ENCODE measurements at regions of chr7 and their contacts with region 1.

Region 1: DNA sequence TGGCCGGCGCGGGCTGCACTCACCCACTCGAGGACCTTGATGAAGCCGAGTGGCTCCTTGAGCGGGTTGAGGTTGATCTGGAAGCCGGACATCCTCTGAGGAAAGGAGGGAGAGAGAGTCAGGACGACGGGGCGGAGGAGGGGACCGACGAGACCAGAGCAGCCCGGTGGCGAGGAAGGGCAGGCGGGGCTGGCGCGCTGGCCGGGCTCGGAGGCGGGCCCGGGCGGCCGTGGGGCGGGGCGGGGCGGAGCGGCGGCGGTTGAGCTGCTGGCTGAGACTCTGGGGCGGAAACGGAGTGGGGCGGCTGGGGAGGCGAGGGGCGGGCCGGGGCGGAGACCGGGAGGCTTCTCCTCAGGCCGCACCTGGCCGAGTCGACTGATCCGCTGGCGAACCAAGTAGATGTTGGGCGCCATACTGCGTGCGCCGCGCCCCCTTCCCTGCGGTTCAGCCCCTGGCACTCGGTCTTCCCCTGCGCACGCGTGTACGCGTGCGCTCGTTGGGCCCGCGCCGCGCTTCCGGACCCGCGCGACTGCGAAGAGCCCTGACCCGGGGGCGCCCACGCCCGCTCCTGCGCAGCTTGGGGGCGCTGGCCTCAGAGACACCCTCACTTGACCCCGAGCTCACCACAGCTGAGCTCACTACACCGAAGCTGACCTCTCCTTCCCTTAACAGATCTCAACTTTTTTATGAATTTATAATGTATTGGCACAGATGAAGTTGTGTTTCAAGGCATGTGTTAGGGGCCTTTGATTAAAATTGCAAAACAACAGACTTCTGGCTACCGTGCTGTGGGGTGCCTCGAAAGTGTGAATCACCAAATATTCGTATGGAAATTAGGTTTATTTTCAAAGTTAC is at the start of gene SYPL1:
- DNase-seq: peak; percentile 86 to 97 (median 95)
- ATAC-seq: peak; percentile 88
- H3K4me3 ChIP-seq: peak within 1 kb of the TSS; percentile 64 to 69
- H3K4me3 Mint-ChIP-seq: peak within 1 kb of the TSS; percentile 89
- H3K27ac ChIP-seq: peak within 1 kb of the TSS; percentile 84 to 85
- H3K27ac Mint-ChIP-seq: peak within 1 kb of the TSS; percentile 96
- H3K4me1 ChIP-seq: peaks cover 71% of the 10 kb centered on the region
- H3K4me1 Mint-ChIP-seq: peaks cover 72% of the 10 kb centered on the region
- H3K27me3 ChIP-seq: no peaks in the 10 kb centered on the region
- H3K27me3 Mint-ChIP-seq: no peaks in the 10 kb centered on the region
- CTCF ChIP-seq: no peak
- total RNA-seq, gene SYPL1: 50.0 to 51.2 TPM

Region 2: GRCh38 chr7:104943502-104944343 is 1168.6 kb before region 1 on chr7:
- CTCF ChIA-PET with region 1: no interaction called
- POLR2A ChIA-PET with region 1: no interaction called
- intact Hi-C with region 1: loop called in 1 of 2 experiments (anchors 5 kb)
- DNase-seq: peak; percentile 40 to 86 (median 69)
- ATAC-seq: peak; percentile 24
- H3K4me3 ChIP-seq: peak overlapping the region; percentile 10 to 18
- H3K4me3 Mint-ChIP-seq: peak overlapping the region; percentile 83
- H3K27ac ChIP-seq: peak overlapping the region; percentile 98
- H3K27ac Mint-ChIP-seq: peak overlapping the region; percentile 100
- H3K4me1 ChIP-seq: peaks cover 52% of the 10 kb centered on the region
- H3K4me1 Mint-ChIP-seq: peaks cover 64% of the 10 kb centered on the region
- H3K27me3 ChIP-seq: no peaks in the 10 kb centered on the region
- H3K27me3 Mint-ChIP-seq: no peaks in the 10 kb centered on the region
- CTCF ChIP-seq: no peak

Region 3: GRCh38 chr7:105876091-105876963 is 236.0 kb before region 1 on chr7 and contains the start of gene ATXN7L1:
- CTCF ChIA-PET with region 1: no interaction called
- POLR2A ChIA-PET with region 1: no interaction called
- intact Hi-C with region 1: loop called in 1 of 2 experiments (anchors 5 kb)
- DNase-seq: peak; percentile 81 to 94 (median 89)
- ATAC-seq: peak; percentile 94
- H3K4me3 ChIP-seq: peak within 1 kb of the TSS; percentile 76 to 98
- H3K4me3 Mint-ChIP-seq: peak within 1 kb of the TSS; percentile 97
- H3K27ac ChIP-seq: peak within 1 kb of the TSS; percentile 53 to 78
- H3K27ac Mint-ChIP-seq: peak within 1 kb of the TSS; percentile 96
- H3K4me1 ChIP-seq: peaks cover 37% of the 10 kb centered on the region
- H3K4me1 Mint-ChIP-seq: peaks cover 61% of the 10 kb centered on the region
- H3K27me3 ChIP-seq: no peaks in the 10 kb centered on the region
- H3K27me3 Mint-ChIP-seq: no peaks in the 10 kb centered on the region
- CTCF ChIP-seq: peak; percentile 29
- total RNA-seq, gene ATXN7L1: 17.0 to 18.5 TPM

Region 4: GRCh38 chr7:106094800-106095199 is 17.5 kb before region 1 on chr7:
- CTCF ChIA-PET with region 1: interaction called, 4 read pairs
- POLR2A ChIA-PET with region 1: interaction called, 12 read pairs
- intact Hi-C with region 1: loop called in 1 of 2 experiments (anchors 2 kb)
- DNase-seq: no peak
- ATAC-seq: no peak
- H3K4me3 ChIP-seq: no peak overlapping the region
- H3K4me3 Mint-ChIP-seq: no peak overlapping the region
- H3K27ac ChIP-seq: no peak overlapping the region
- H3K27ac Mint-ChIP-seq: no peak overlapping the region
- H3K4me1 ChIP-seq: no peaks in the 10 kb centered on the region
- H3K4me1 Mint-ChIP-seq: peaks cover 11% of the 10 kb centered on the region
- H3K27me3 ChIP-seq: no peaks in the 10 kb centered on the region
- H3K27me3 Mint-ChIP-seq: no peaks in the 10 kb centered on the region
- CTCF ChIP-seq: no peak

Region 5: GRCh38 chr7:106285051-106285854 is 172.9 kb after region 1 on chr7:
- CTCF ChIA-PET with region 1: no interaction called
- POLR2A ChIA-PET with region 1: interaction called, 7 read pairs
- intact Hi-C with region 1: loop called (anchors 1 to 2 kb)
- DNase-seq: peak; percentile 92 to 99 (median 96)
- ATAC-seq: peak; percentile 89
- H3K4me3 ChIP-seq: peak overlapping the region; percentile 81 to 83
- H3K4me3 Mint-ChIP-seq: peak overlapping the region; percentile 96
- H3K27ac ChIP-seq: peak overlapping the region; percentile 71 to 93
- H3K27ac Mint-ChIP-seq: peak overlapping the region; percentile 98
- H3K4me1 ChIP-seq: peaks cover 17% of the 10 kb centered on the region
- H3K4me1 Mint-ChIP-seq: peaks cover 27% of the 10 kb centered on the region
- H3K27me3 ChIP-seq: no peaks in the 10 kb centered on the region
- H3K27me3 Mint-ChIP-seq: peaks cover 2% of the 10 kb centered on the region
- CTCF ChIP-seq: no peak

Region 6: DNA sequence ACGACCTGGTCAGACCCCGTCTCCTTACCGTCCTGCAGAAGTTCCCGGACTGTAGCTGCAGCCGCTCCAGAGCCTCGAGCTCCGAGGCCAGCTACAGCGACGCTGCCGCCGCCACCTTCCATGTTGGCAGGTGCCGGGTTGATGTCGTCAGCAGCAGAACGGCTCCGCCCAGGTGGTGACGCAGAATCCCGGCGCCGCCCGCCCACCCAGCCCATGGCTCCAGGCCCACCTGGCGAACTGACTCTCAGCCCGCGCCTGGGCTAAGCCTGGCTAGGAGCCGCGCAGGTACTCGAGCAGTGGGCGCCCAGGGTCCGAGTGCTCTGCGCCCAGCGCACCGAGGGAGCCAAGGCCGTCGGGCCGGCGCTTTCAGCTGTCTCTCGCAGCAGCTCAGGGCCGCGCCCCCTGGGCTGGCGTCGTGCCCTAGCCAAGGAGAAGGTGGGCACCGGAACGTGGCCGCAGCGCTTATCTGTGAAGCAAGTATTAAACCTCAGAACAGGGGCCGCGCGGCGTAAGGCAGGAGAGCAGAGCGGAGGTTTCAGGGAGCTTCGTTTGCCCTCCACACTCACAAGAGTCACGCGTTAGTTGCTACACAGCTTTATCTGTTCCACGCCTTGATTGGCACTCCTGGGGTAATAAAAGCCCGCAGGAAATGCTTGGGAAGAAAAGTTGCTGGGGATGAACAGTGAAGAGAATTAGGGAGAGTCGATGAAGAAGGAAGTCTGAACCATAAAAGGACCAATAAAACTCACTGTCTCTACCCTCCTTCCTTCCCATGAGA is 1451.6 kb after region 1 on chr7 and contains the starts of genes COG5 and DUS4L:
- CTCF ChIA-PET with region 1: no interaction called
- POLR2A ChIA-PET with region 1: no interaction called
- intact Hi-C with region 1: loop called in 1 of 2 experiments (anchors 10 kb)
- DNase-seq: peak; percentile 73 to 93 (median 86)
- ATAC-seq: peak; percentile 83
- H3K4me3 ChIP-seq: peak within 1 kb of the TSS; percentile 91 to 97
- H3K4me3 Mint-ChIP-seq: peak within 1 kb of the TSS; percentile 80
- H3K27ac ChIP-seq: peak within 1 kb of the TSS; percentile 95 to 96
- H3K27ac Mint-ChIP-seq: peak within 1 kb of the TSS; percentile 89
- H3K4me1 ChIP-seq: peaks cover 46% of the 10 kb centered on the region
- H3K4me1 Mint-ChIP-seq: peaks cover 65% of the 10 kb centered on the region
- H3K27me3 ChIP-seq: no peaks in the 10 kb centered on the region
- H3K27me3 Mint-ChIP-seq: no peaks in the 10 kb centered on the region
- CTCF ChIP-seq: no peak
- total RNA-seq, gene COG5: 45.7 to 46.8 TPM
- total RNA-seq, gene DUS4L: 13.1 to 16.4 TPM

Measured in CD8-positive, alpha-beta T cell (primary cell).